Right ventricle myocardium superior (tissue), 1 donor: ENCODE measurements at regions of chr7 and their contacts with region 1.

Region 1: GRCh38 chr7:47266131-47266706 is 315.7 kb downstream of the TNS3 start:
- DNase-seq: peak; percentile 63
- ATAC-seq: peak; percentile 90

Region 2: DNA sequence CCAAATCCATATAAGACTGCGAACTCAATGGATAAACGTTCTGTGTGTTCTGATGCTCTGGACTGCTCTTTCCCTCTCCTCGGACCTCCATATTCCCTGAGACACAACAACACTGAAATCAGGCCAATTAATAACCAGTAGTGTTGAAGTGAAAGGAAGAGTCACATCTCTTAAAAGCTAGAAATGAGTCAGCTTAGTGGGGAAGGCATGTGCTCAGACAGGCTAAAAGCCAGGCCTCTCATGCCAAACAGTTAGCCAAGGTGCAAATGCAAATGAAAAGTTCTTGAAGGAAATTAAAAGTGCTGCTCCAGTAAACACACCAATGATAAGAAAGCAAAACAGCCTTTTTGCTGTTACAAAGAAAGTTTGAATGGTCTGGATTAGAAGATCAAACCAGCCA is 286.4 kb after region 1 on chr7:
- intact Hi-C with region 1: no loop called
- DNase-seq: no peak
- ATAC-seq: peak; percentile 71

Region 3: GRCh38 chr7:47818796-47819606 is 552.8 kb after region 1 on chr7:
- intact Hi-C with region 1: loop called (anchors 2 kb)
- DNase-seq: peak; percentile 77
- ATAC-seq: peak; percentile 84